Calu3 (cell line): ENCODE measurements at regions of chr7 and their contacts with region 1.

Region 1: GRCh38 chr7:47179812-47180515 is 401.9 kb downstream of the TNS3 start:
- DNase-seq: peak; percentile 84
- H3K4me3 Mint-ChIP-seq: no peak overlapping the region
- H3K27ac Mint-ChIP-seq: no peak overlapping the region
- H3K4me1 Mint-ChIP-seq: peaks cover 21% of the 10 kb centered on the region
- H3K27me3 Mint-ChIP-seq: peaks cover 16% of the 10 kb centered on the region
- CTCF ChIP-seq: peak; percentile 89

Region 2: GRCh38 chr7:45890902-45891461 is 1289.0 kb before region 1 on chr7:
- CTCF ChIA-PET with region 1: no interaction called
- intact Hi-C with region 1: loop called (anchors 2 kb)
- DNase-seq: peak; percentile 36
- H3K4me3 Mint-ChIP-seq: no peak overlapping the region
- H3K27ac Mint-ChIP-seq: no peak overlapping the region
- H3K4me1 Mint-ChIP-seq: peaks cover 24% of the 10 kb centered on the region
- H3K27me3 Mint-ChIP-seq: no peaks in the 10 kb centered on the region
- CTCF ChIP-seq: no peak

Region 3: DNA sequence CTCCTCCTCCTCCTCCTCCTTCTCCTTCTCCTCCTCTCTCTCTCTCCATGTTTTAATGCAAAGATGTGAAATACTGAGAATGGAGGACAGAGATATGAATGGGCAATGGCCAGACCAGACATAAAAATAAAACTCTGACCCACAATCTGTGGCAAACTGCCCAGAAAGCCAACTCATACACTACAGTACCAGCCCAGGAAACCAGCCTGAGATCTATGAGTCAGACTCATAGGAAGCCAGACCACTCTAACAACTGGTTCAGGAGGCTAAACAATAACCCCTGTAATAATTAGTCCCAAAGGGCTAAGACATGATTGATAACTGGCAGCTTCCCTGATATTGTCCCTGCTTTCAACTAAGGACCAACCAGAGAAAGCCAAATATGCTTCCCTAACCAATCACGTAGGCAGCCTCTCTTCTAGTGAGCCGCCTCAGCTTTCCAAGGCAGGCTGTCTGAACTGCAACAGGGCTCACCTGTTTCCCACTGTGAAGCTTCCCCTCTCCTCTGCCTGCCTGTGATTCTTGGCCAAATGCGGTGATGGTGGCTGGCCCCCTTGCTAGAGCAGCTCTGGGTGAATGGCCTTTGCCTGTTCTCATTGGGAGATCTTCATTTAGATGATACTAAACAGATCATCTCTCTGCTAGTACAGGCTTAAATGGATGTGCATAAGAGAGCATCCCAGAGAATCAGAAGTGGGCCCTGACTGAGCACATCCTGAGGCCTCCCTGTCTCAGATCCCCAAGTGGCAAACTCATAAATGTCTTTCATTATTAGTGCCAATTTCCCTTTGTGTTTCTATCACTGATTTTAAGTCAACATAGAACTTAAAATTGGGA is 415.6 kb before region 1 on chr7:
- CTCF ChIA-PET with region 1: no interaction called
- intact Hi-C with region 1: loop called (anchors 10 kb)
- DNase-seq: peak; percentile 90
- H3K4me3 Mint-ChIP-seq: peak overlapping the region; percentile 4
- H3K27ac Mint-ChIP-seq: peak overlapping the region; percentile 80
- H3K4me1 Mint-ChIP-seq: peaks cover 30% of the 10 kb centered on the region
- H3K27me3 Mint-ChIP-seq: no peaks in the 10 kb centered on the region
- CTCF ChIP-seq: no peak